HCT116 (cell line): ENCODE measurements at regions of chr21 and their contacts with region 1.

Region 1: GRCh38 chr21:33608559-33608958 is 20.1 kb upstream of the DONSON start:
- DNase-seq: no peak
- ATAC-seq: no peak
- H3K4me3 ChIP-seq: no peak overlapping the region
- H3K27ac ChIP-seq: no peak overlapping the region
- H3K4me1 ChIP-seq: no peaks in the 10 kb centered on the region
- H3K27me3 ChIP-seq: no peaks in the 10 kb centered on the region
- CTCF ChIP-seq: no peak
- POLR2A ChIP-seq: no peak
- RAD21 ChIP-seq: no peak

Region 2: DNA sequence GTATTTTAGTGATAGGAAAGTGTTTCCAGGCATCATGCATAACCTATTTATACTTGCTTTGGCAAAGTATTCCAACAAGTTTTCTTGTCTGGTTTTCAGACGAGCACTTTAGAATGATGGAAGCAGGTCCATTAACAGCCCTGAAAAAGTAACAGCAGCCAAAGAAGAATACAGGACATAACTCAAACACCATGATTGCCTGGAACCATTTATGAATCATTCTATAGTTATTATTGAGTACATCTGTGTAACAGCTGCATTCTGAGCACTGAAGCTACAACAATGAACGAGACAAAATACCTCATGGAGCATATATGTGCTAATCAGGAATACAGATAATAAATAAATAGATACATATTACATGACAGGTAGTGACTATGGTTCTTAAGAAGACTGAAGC is 329.8 kb before region 1 on chr21:
- CTCF ChIA-PET with region 1: no interaction called
- POLR2A ChIA-PET with region 1: no interaction called
- RAD21 ChIA-PET with region 1: no interaction called
- intact Hi-C with region 1: no loop called
- DNase-seq: no peak
- ATAC-seq: no peak
- H3K4me3 ChIP-seq: no peak overlapping the region
- H3K27ac ChIP-seq: no peak overlapping the region
- H3K4me1 ChIP-seq: no peaks in the 10 kb centered on the region
- H3K27me3 ChIP-seq: no peaks in the 10 kb centered on the region
- CTCF ChIP-seq: no peak
- POLR2A ChIP-seq: no peak
- RAD21 ChIP-seq: no peak

Region 3: DNA sequence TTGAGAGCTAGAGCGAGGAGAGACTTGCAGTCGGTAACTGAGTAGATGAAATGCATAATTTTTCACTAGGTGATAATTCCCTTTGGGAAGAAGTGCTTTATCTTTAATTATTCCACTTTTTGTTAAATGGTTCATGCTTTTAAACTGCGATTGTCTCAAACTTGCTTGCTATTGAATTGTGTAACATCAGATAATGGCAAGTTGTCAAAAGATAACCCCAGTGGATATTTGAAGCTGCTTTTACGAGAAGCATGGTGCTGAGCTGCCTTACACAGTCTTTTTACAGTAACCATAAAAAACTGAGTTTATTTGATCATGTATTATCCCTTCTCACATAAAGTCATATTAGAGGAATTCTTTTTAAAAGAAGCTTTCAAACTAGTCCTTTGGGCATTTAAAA is 158.9 kb before region 1 on chr21:
- CTCF ChIA-PET with region 1: interaction called, 4 read pairs
- POLR2A ChIA-PET with region 1: interaction called, 3 read pairs
- RAD21 ChIA-PET with region 1: interaction called in 1 of 2 experiments, 3 read pairs
- intact Hi-C with region 1: loop called (anchors 5 kb)
- DNase-seq: no peak
- ATAC-seq: no peak
- H3K4me3 ChIP-seq: no peak overlapping the region
- H3K27ac ChIP-seq: no peak overlapping the region
- H3K4me1 ChIP-seq: peaks cover 3 to 6% of the 10 kb centered on the region in 2 experiments; a peak in 1 of 4 replicates
- H3K27me3 ChIP-seq: no peaks in the 10 kb centered on the region
- CTCF ChIP-seq: no peak
- POLR2A ChIP-seq: no peak
- RAD21 ChIP-seq: no peak

Region 4: GRCh38 chr21:33588485-33589335 is 19.8 kb before region 1 on chr21 and contains the start of gene DONSON:
- CTCF ChIA-PET with region 1: interaction called, 17 read pairs
- POLR2A ChIA-PET with region 1: interaction called, 3 read pairs
- RAD21 ChIA-PET with region 1: no interaction called
- intact Hi-C with region 1: no loop called
- DNase-seq: peak; percentile 35
- ATAC-seq: peak; percentile 93
- H3K4me3 ChIP-seq: peak within 1 kb of the TSS; percentile 86 to 88
- H3K27ac ChIP-seq: peak within 1 kb of the TSS; percentile 86
- H3K4me1 ChIP-seq: peaks cover 6 to 21% of the 10 kb centered on the region in 2 experiments; a peak in 3 of 4 replicates
- H3K27me3 ChIP-seq: no peaks in the 10 kb centered on the region
- CTCF ChIP-seq: no peak
- POLR2A ChIP-seq: peak; percentile 58
- RAD21 ChIP-seq: no peak
- total RNA-seq, gene DONSON: 31.7 TPM

Region 5: DNA sequence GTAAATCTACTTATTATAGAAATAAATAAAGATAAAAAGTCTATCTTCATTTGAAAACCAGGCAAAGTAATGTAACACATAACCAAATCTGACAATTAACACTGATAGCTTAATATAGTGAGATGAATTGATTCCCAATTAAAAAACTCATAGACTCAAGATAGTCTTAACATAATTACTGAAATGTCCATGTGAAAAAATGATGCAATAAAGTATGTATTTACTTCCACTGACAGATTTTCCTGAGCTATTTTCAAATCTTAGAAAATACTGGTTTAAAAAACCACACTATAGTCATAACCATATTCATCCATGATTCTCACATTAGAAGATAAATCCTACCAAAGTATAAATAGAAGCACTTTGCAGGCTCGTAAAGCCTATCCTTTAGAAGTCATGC is 10.5 kb before region 1 on chr21:
- CTCF ChIA-PET with region 1: interaction called, 19 read pairs
- POLR2A ChIA-PET with region 1: no interaction called
- RAD21 ChIA-PET with region 1: no interaction called
- intact Hi-C with region 1: no loop called
- DNase-seq: no peak
- ATAC-seq: no peak
- H3K4me3 ChIP-seq: no peak overlapping the region
- H3K27ac ChIP-seq: no peak overlapping the region
- H3K4me1 ChIP-seq: no peaks in the 10 kb centered on the region
- H3K27me3 ChIP-seq: no peaks in the 10 kb centered on the region
- CTCF ChIP-seq: no peak
- POLR2A ChIP-seq: no peak
- RAD21 ChIP-seq: no peak

Region 6: GRCh38 chr21:33619726-33620125 is 11.2 kb after region 1 on chr21:
- CTCF ChIA-PET with region 1: interaction called, 25 read pairs
- POLR2A ChIA-PET with region 1: interaction called, 3 read pairs
- RAD21 ChIA-PET with region 1: no interaction called
- intact Hi-C with region 1: no loop called
- DNase-seq: no peak
- ATAC-seq: no peak
- H3K4me3 ChIP-seq: no peak overlapping the region
- H3K27ac ChIP-seq: no peak overlapping the region
- H3K4me1 ChIP-seq: no peaks in the 10 kb centered on the region
- H3K27me3 ChIP-seq: no peaks in the 10 kb centered on the region
- CTCF ChIP-seq: no peak
- POLR2A ChIP-seq: no peak
- RAD21 ChIP-seq: no peak

Region 7: GRCh38 chr21:33634254-33634653 is 25.7 kb after region 1 on chr21:
- CTCF ChIA-PET with region 1: no interaction called
- POLR2A ChIA-PET with region 1: no interaction called
- RAD21 ChIA-PET with region 1: no interaction called
- intact Hi-C with region 1: no loop called
- DNase-seq: no peak
- ATAC-seq: no peak
- H3K4me3 ChIP-seq: no peak overlapping the region
- H3K27ac ChIP-seq: no peak overlapping the region
- H3K4me1 ChIP-seq: no peaks in the 10 kb centered on the region
- H3K27me3 ChIP-seq: no peaks in the 10 kb centered on the region
- CTCF ChIP-seq: no peak
- POLR2A ChIP-seq: no peak
- RAD21 ChIP-seq: no peak

Region 8: GRCh38 chr21:33901412-33902288 is 293.1 kb after region 1 on chr21:
- CTCF ChIA-PET with region 1: interaction called, 15 read pairs
- POLR2A ChIA-PET with region 1: no interaction called
- RAD21 ChIA-PET with region 1: interaction called in 1 of 2 experiments, 8 read pairs
- intact Hi-C with region 1: loop called (anchors 5 kb)
- DNase-seq: peak; percentile 38
- ATAC-seq: peak; percentile 96
- H3K4me3 ChIP-seq: no peak overlapping the region
- H3K27ac ChIP-seq: no peak overlapping the region
- H3K4me1 ChIP-seq: no peaks in the 10 kb centered on the region
- H3K27me3 ChIP-seq: no peaks in the 10 kb centered on the region
- CTCF ChIP-seq: peak; percentile 21 to 81 (median 75); a peak in 5 of 6 replicates
- POLR2A ChIP-seq: no peak
- RAD21 ChIP-seq: peak; percentile 75